ENCODE measurements at regions of chr22 and their contacts with region 1.

Region 1: DNA sequence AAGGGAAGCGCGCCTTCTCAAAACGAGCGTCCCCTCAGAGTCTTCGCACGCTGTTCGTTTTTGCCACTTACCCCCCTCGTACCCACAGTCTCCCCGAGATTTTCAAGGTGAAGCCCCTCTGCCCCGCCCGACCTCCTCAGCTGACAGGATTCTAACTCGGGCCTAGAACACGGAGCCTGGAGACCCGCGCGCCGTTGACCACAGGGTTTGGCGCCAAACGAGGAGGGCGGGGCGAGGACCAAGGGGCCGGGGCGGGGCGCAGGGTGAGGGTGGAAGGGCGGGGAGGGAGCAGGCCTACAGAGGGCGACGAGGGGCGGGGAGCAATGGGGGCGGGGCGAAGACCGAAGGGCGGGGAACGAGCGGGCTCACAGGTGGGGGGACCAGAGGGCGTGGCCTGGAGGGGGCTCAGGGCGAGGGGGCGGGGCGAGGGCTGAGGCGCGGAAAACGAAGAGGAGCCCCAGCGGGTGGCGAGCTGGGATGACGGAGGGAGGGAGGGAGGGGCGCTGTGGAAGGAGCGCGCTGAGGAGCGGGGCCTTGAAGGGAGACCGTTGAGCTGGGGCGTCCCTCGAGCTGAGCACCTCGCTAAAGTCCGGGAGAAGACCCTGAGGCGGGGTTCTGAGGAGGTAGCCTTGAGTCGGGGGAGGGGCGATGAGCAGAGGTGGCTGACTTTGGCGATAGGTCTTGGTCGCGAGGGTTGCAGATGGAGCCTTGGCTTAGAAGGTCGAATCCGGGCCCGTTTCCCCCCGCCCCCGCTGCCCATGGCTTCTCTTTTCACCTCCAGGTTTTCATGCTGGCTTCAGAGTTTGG is at the start of gene DMC1:
- DNase-seq: peak; percentile 93
- ATAC-seq: peak; percentile 99
- total RNA-seq, gene DMC1: 0.56 TPM

Region 2: GRCh38 chr22:38056969-38057891 is 512.9 kb before region 1 on chr22 and contains the start of gene PICK1:
- intact Hi-C with region 1: loop called (anchors 5 kb)
- DNase-seq: peak; percentile 91
- ATAC-seq: peak; percentile 89
- total RNA-seq, gene PICK1: 20.4 TPM

Region 3: DNA sequence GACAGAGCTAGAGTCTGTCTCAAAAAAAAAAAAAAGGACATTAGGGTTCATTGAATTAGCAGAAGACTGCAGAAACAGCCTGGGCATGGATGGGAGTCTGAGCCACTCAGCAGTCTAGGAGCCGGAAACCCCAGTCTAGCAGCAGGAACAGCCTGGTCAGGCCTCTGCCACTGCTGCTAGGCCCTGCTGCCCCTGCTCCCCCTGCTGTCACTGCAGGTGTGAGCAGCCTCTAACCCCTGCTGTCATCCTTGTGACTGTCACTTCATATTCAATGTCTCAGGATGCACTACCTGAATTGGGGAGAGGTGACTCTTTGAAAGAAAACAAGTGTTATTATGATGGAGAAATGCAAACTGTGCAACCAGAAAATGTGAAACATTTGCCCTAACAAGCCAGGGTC is 57.1 kb before region 1 on chr22:
- intact Hi-C with region 1: loop called (anchors 10 kb)
- DNase-seq: no peak
- ATAC-seq: peak; percentile 58